ENCODE measurements at regions of chr10 and their contacts with region 1.

Region 1: GRCh38 chr10:118139321-118139720 is 92.6 kb upstream of the RAB11FIP2 start:
- DNase-seq: no peak
- ATAC-seq: no peak
- H3K4me3 ChIP-seq: no peak overlapping the region
- H3K4me3 Mint-ChIP-seq: no peak overlapping the region
- H3K27ac ChIP-seq: no peak overlapping the region
- H3K27ac Mint-ChIP-seq: no peak overlapping the region
- H3K4me1 ChIP-seq: no peaks in the 10 kb centered on the region
- H3K4me1 Mint-ChIP-seq: no peaks in the 10 kb centered on the region
- H3K27me3 ChIP-seq: no peaks in the 10 kb centered on the region
- H3K27me3 Mint-ChIP-seq: peaks cover 15% of the 10 kb centered on the region
- CTCF ChIP-seq: no peak

Region 2: GRCh38 chr10:116915340-116915739 is 1224.0 kb before region 1 on chr10:
- CTCF ChIA-PET with region 1: no interaction called
- POLR2A ChIA-PET with region 1: no interaction called
- intact Hi-C with region 1: loop called (anchors 5 kb)
- DNase-seq: no peak
- ATAC-seq: no peak
- H3K4me3 ChIP-seq: no peak overlapping the region
- H3K4me3 Mint-ChIP-seq: no peak overlapping the region
- H3K27ac ChIP-seq: no peak overlapping the region
- H3K27ac Mint-ChIP-seq: no peak overlapping the region
- H3K4me1 ChIP-seq: no peaks in the 10 kb centered on the region
- H3K4me1 Mint-ChIP-seq: no peaks in the 10 kb centered on the region
- H3K27me3 ChIP-seq: no peaks in the 10 kb centered on the region
- H3K27me3 Mint-ChIP-seq: no peaks in the 10 kb centered on the region
- CTCF ChIP-seq: no peak

Region 3: GRCh38 chr10:118183180-118183579 is 43.9 kb after region 1 on chr10:
- CTCF ChIA-PET with region 1: no interaction called
- POLR2A ChIA-PET with region 1: no interaction called
- intact Hi-C with region 1: no loop called
- DNase-seq: no peak
- ATAC-seq: no peak
- H3K4me3 ChIP-seq: no peak overlapping the region
- H3K4me3 Mint-ChIP-seq: no peak overlapping the region
- H3K27ac ChIP-seq: no peak overlapping the region
- H3K27ac Mint-ChIP-seq: no peak overlapping the region
- H3K4me1 ChIP-seq: no peaks in the 10 kb centered on the region
- H3K4me1 Mint-ChIP-seq: no peaks in the 10 kb centered on the region
- H3K27me3 ChIP-seq: no peaks in the 10 kb centered on the region
- H3K27me3 Mint-ChIP-seq: peaks cover 2% of the 10 kb centered on the region
- CTCF ChIP-seq: no peak

Region 4: DNA sequence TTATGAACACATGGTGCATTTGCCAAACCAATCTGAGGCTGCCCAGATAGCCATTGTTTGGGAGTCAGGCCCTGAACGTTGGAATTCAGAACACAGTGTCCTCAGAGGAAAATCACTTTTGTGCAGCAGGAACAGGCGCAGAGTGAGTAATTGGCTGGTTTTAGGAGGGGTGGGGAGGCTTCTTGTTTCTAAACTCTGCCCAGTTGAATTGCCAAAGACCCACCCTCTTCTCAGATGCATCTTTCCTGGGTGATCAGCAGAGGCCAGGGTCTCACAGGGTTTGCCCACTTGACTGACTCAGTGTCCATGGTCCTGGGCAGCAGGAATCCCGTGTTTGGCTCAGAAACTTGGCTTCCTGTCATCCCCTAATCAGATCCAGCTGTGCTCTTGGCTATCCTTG is 431.8 kb after region 1 on chr10:
- CTCF ChIA-PET with region 1: no interaction called
- POLR2A ChIA-PET with region 1: no interaction called
- intact Hi-C with region 1: no loop called
- DNase-seq: no peak
- ATAC-seq: no peak
- H3K4me3 ChIP-seq: no peak overlapping the region
- H3K4me3 Mint-ChIP-seq: no peak overlapping the region
- H3K27ac ChIP-seq: no peak overlapping the region
- H3K27ac Mint-ChIP-seq: no peak overlapping the region
- H3K4me1 ChIP-seq: no peaks in the 10 kb centered on the region
- H3K4me1 Mint-ChIP-seq: no peaks in the 10 kb centered on the region
- H3K27me3 ChIP-seq: no peaks in the 10 kb centered on the region
- H3K27me3 Mint-ChIP-seq: peaks cover 15% of the 10 kb centered on the region
- CTCF ChIP-seq: no peak

Measured in B cell (primary cell).